ENCODE measurements at regions of chr2 and their contacts with region 1.

Region 1: GRCh38 chr2:8681786-8682692 is at the start of gene ID2:
- DNase-seq: peak; percentile 98
- H3K4me3 Mint-ChIP-seq: peak within 1 kb of the TSS; percentile 96
- H3K27ac Mint-ChIP-seq: peak within 1 kb of the TSS; percentile 91
- H3K4me1 Mint-ChIP-seq: peaks cover 31% of the 10 kb centered on the region
- H3K27me3 Mint-ChIP-seq: peaks cover 18% of the 10 kb centered on the region
- total RNA-seq, gene ID2: 73.9 to 81.9 TPM

Region 2: DNA sequence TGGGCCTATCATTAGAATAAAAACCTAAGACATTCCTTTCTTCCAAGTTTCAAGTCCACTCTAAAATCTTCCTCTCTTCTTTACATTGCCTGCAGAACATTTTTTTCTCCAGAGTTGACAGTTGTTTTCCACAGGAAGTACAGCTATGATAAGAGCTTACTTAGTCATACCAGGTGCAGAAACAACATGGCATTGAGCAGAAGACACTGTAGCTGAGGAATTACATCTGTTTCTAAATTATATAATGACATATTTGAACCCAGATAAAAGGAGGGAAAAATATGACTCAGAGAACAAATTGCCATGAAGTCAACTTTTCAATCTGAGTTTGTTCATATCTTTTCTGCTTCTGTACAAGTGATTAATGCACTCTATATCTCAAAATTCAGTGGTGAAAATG is 1846.6 kb before region 1 on chr2:
- CTCF ChIA-PET with region 1: no interaction called
- intact Hi-C with region 1: loop called (anchors 5 kb)
- DNase-seq: no peak
- H3K4me3 Mint-ChIP-seq: no peak overlapping the region
- H3K27ac Mint-ChIP-seq: peak overlapping the region; percentile 1
- H3K4me1 Mint-ChIP-seq: peaks cover 19% of the 10 kb centered on the region
- H3K27me3 Mint-ChIP-seq: no peaks in the 10 kb centered on the region

Region 3: DNA sequence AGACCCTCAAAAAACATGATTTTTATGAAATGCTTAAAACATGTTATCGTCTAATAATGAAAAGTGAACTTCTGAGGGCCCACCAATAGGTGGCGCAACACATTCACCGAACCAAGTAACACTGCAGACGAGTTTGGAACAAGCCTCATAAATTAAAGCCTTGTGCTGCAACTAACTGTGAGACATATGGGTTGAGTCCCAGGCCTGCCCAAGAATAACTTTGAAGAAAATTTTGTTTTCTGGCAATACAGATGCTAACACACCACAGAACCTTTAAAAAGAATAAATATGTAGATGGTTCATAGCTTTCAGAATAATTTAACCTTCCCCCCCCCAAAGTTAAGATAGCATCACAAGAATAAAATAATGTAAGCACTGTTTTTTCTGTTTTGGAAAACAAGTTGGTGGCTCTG is 1479.0 kb before region 1 on chr2:
- CTCF ChIA-PET with region 1: no interaction called
- intact Hi-C with region 1: loop called (anchors 1 kb)
- DNase-seq: peak; percentile 77
- H3K4me3 Mint-ChIP-seq: no peak overlapping the region
- H3K27ac Mint-ChIP-seq: no peak overlapping the region
- H3K4me1 Mint-ChIP-seq: no peaks in the 10 kb centered on the region
- H3K27me3 Mint-ChIP-seq: no peaks in the 10 kb centered on the region

Region 4: GRCh38 chr2:7725171-7725849 is 956.7 kb before region 1 on chr2:
- CTCF ChIA-PET with region 1: no interaction called
- intact Hi-C with region 1: loop called (anchors 5 kb)
- DNase-seq: peak; percentile 19
- H3K4me3 Mint-ChIP-seq: peak overlapping the region; percentile 30
- H3K27ac Mint-ChIP-seq: peak overlapping the region; percentile 25
- H3K4me1 Mint-ChIP-seq: peaks cover 15% of the 10 kb centered on the region
- H3K27me3 Mint-ChIP-seq: no peaks in the 10 kb centered on the region

Region 5: DNA sequence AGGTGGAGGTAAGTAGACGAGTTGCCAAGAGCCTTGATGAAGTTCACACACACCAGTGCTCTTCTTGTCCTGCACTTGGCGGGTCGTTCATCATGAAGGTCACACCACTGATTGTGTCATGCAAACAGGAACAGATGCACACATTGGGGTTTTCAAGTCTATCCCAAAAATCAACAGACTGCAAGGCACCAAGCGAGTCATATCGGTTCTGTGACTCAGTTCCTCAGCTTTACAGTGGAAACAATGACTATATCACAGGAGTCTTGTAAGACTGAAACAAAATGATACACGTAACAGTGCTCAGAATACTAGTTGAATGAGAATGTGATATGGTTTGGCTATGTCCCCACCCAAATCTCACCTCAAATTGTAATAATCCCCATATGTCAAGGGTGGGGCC is 527.1 kb before region 1 on chr2:
- CTCF ChIA-PET with region 1: no interaction called
- intact Hi-C with region 1: loop called (anchors 1 kb)
- DNase-seq: peak; percentile 68
- H3K4me3 Mint-ChIP-seq: no peak overlapping the region
- H3K27ac Mint-ChIP-seq: peak overlapping the region; percentile 78
- H3K4me1 Mint-ChIP-seq: peaks cover 16% of the 10 kb centered on the region
- H3K27me3 Mint-ChIP-seq: no peaks in the 10 kb centered on the region

Region 6: DNA sequence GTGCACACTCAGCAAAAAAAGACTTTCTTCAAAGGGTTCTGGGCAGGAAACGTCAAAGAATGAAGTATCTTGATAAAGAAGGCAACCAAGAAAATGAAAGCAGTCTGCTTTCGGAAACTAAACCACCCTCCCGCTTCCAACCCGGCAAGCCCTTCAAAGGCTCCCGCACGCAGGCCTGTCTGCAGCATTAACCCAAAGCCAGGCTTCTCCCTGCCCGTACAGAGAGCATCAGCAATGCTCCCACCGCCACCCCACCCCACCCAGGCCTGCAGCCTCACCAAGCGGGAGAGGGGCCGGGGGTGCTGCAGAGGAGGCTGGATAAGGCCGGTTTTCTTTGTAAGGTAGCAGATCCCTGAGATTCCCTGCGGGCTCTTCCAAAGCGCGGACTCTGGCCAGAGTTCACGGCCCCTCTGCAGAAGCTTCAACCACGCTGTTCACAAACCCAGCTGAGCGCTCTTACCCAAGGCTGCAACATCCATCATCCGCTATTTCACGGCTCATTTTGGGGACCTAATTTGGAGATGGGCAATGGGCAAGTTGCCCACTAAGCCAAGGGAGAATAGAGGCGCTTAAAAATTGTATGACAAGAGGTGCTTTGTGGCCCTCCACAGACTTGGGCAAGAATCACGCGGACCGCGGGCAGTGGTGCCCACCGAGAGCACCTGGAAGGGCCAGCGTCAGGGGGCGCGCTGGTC is 225.7 kb before region 1 on chr2:
- CTCF ChIA-PET with region 1: interaction called, 3 read pairs
- intact Hi-C with region 1: loop called (anchors 2 kb)
- DNase-seq: peak; percentile 71
- H3K4me3 Mint-ChIP-seq: peak overlapping the region; percentile 51
- H3K27ac Mint-ChIP-seq: no peak overlapping the region
- H3K4me1 Mint-ChIP-seq: peaks cover 18% of the 10 kb centered on the region
- H3K27me3 Mint-ChIP-seq: peaks cover 18% of the 10 kb centered on the region

Region 7: GRCh38 chr2:8803658-8804379 is 121.8 kb after region 1 on chr2:
- CTCF ChIA-PET with region 1: no interaction called
- intact Hi-C with region 1: loop called (anchors 1 kb)
- DNase-seq: peak; percentile 78
- H3K4me3 Mint-ChIP-seq: no peak overlapping the region
- H3K27ac Mint-ChIP-seq: peak overlapping the region; percentile 75
- H3K4me1 Mint-ChIP-seq: peaks cover 19% of the 10 kb centered on the region
- H3K27me3 Mint-ChIP-seq: no peaks in the 10 kb centered on the region